Posterior vena cava (tissue), 2 donors: ENCODE measurements at regions of chr1 and their contacts with region 1.

Region 1: GRCh38 chr1:53699981-53700380 is 39.0 kb downstream of the GLIS1 start:
- DNase-seq: no peak

Region 2: GRCh38 chr1:53658489-53659230 is 41.3 kb before region 1 on chr1:
- intact Hi-C with region 1: loop called in 1 of 2 experiments (anchors 1 kb)
- DNase-seq: peak; percentile 58

Region 3: DNA sequence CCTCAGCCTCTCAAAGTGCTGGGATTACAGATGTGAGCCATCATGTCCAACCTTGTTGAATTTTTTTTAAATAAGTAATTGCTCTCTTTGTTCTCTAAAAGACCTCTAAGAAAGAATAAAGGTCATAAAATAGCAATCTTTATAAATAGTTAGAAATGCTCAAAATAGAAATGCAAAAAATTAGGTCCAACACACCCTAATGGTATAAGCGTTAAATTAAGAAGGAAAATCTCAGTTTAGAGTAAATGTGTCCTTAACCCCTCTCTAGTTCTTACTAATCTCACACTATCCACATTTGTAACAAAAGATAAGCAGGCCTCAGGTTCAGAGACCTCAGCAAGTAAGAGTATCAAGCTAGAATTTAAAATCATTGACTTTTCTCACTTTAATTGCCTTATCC is 77.3 kb after region 1 on chr1:
- intact Hi-C with region 1: loop called in 1 of 2 experiments (anchors 2 kb)
- DNase-seq: no peak